Ovary (tissue), 10 donors: ENCODE measurements at regions of chr5 and their contacts with region 1.

Region 1: GRCh38 chr5:97534166-97534565 is 351.1 kb upstream of the RIOK2 start:
- DNase-seq: peak in 2 of 5 donors; percentile 18 to 49
- H3K4me3 ChIP-seq: no peak overlapping the region
- H3K27ac ChIP-seq: no peak overlapping the region
- H3K4me1 ChIP-seq: no peaks in the 10 kb centered on the region
- H3K27me3 ChIP-seq: no peaks in the 10 kb centered on the region
- CTCF ChIP-seq: peak; percentile 31 to 65 (median 52)
- EP300 ChIP-seq: no peak
- POLR2A ChIP-seq: no peak

Region 2: GRCh38 chr5:97049175-97049574 is 485.0 kb before region 1 on chr5:
- intact Hi-C with region 1: no loop called
- DNase-seq: no peak
- H3K4me3 ChIP-seq: no peak overlapping the region
- H3K27ac ChIP-seq: no peak overlapping the region
- H3K4me1 ChIP-seq: no peaks in the 10 kb centered on the region
- H3K27me3 ChIP-seq: no peaks in the 10 kb centered on the region
- CTCF ChIP-seq: no peak
- EP300 ChIP-seq: no peak
- POLR2A ChIP-seq: no peak

Region 3: GRCh38 chr5:97224112-97224750 is 309.9 kb before region 1 on chr5:
- intact Hi-C with region 1: loop called in 1 of 4 experiments (anchors 10 kb)
- DNase-seq: no peak
- H3K4me3 ChIP-seq: no peak overlapping the region
- H3K27ac ChIP-seq: no peak overlapping the region
- H3K4me1 ChIP-seq: no peaks in the 10 kb centered on the region
- H3K27me3 ChIP-seq: no peaks in the 10 kb centered on the region
- CTCF ChIP-seq: no peak
- EP300 ChIP-seq: no peak
- POLR2A ChIP-seq: no peak

Region 4: DNA sequence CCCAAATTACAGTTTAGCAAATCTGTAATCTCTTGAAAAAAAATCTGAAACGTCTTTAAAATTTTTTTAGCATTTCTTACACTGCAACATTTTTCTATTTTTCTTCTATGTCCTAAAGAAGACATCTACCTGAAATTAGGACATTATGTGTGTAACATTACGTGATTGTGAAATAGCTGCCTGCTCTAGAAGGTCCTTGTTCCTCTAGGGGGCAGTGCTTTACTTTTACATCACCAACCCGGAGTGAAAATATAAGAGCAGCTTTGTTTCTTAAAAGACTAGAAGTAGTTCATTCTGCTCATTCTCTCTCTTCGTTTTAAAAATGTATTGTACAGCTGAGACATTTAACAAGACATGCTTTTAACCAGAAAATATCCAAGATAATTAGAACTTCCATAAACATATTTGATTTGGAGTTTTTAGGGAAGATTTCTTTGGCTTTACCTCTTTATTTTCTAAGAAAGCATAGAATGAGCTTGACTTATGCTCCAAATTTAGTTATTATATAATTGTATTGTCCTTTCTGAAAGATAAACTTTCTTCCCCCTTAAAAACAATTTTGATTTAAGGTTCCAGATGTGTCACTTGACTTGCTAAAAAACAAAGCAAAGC is 303.0 kb before region 1 on chr5:
- intact Hi-C with region 1: loop called in 2 of 4 experiments (anchors 10 kb)
- DNase-seq: peak in 2 of 5 donors; percentile 15 to 68
- H3K4me3 ChIP-seq: no peak overlapping the region
- H3K27ac ChIP-seq: peak overlapping the region in 1 of 2 donors; percentile 46
- H3K4me1 ChIP-seq: no peaks in the 10 kb centered on the region
- H3K27me3 ChIP-seq: no peaks in the 10 kb centered on the region
- CTCF ChIP-seq: peak; percentile 51 to 84 (median 79)
- EP300 ChIP-seq: no peak
- POLR2A ChIP-seq: no peak

Region 5: GRCh38 chr5:97608501-97608900 is 74.3 kb after region 1 on chr5:
- intact Hi-C with region 1: no loop called
- DNase-seq: no peak
- H3K4me3 ChIP-seq: no peak overlapping the region
- H3K27ac ChIP-seq: no peak overlapping the region
- H3K4me1 ChIP-seq: no peaks in the 10 kb centered on the region
- H3K27me3 ChIP-seq: no peaks in the 10 kb centered on the region
- CTCF ChIP-seq: no peak
- EP300 ChIP-seq: no peak
- POLR2A ChIP-seq: no peak